ENCODE measurements at regions of chr12 and their contacts with region 1.

Region 1: GRCh38 chr12:85866986-85867776 is 6.9 kb upstream of the NTS start:
- H3K4me3 ChIP-seq: no peak overlapping the region
- H3K27ac ChIP-seq: no peak overlapping the region
- H3K4me1 ChIP-seq: no peaks in the 10 kb centered on the region
- CTCF ChIP-seq: peak; percentile 51; the same call in 1 of the 2 replicates

Region 2: DNA sequence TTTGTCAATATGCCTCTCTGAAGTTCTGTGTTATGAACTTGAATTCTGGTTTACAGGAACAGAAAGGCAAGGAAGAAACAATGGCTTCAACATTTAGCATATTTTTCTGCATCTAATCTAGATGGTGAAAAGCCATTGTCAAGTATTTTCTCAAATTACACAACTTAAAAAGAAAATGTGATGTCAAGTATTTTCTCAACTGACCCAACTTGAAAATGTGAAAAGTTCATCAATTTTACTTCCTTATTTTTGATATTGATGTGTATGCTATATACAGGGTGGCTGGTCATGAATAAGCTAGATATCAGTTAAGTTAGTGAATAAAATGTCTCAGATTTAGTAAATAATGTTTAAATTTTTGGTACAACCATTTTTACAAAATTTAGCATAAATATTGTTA is 390.4 kb before region 1 on chr12:
- CTCF ChIA-PET with region 1: interaction called, 10 read pairs
- POLR2A ChIA-PET with region 1: no interaction called
- H3K4me3 ChIP-seq: no peak overlapping the region
- H3K27ac ChIP-seq: no peak overlapping the region
- H3K4me1 ChIP-seq: no peaks in the 10 kb centered on the region
- CTCF ChIP-seq: no peak

Region 3: DNA sequence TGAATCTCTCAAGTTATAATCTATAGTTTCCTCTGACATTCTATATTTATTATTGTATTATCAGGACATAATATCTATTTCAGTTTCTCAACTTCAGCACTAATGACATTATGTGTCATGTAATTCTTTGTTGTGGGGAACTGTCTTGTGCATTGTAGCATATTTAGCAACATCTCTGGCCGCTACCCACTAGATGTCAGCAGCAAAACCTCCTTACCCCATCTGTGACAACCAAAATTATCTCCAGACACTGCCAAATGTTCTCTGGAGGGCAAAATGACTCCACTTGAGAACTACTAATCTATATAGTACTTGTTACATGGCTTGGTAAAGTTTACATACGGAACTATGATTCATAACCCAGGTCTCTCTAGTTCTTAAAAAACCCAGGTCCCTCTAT is 141.2 kb before region 1 on chr12:
- CTCF ChIA-PET with region 1: interaction called, 13 read pairs
- POLR2A ChIA-PET with region 1: no interaction called
- H3K4me3 ChIP-seq: no peak overlapping the region
- H3K27ac ChIP-seq: no peak overlapping the region
- H3K4me1 ChIP-seq: no peaks in the 10 kb centered on the region
- CTCF ChIP-seq: no peak

Region 4: GRCh38 chr12:85794531-85794930 is 72.7 kb before region 1 on chr12:
- CTCF ChIA-PET with region 1: interaction called, 11 read pairs
- POLR2A ChIA-PET with region 1: no interaction called
- H3K4me3 ChIP-seq: no peak overlapping the region
- H3K27ac ChIP-seq: no peak overlapping the region
- H3K4me1 ChIP-seq: peaks cover 4% of the 10 kb centered on the region; the same call in 1 of the 2 replicates
- CTCF ChIP-seq: no peak

Measured in HEK293 (cell line).